Breast epithelium (tissue), 4 donors: ENCODE measurements at regions of chr5 and their contacts with region 1.

Region 1: DNA sequence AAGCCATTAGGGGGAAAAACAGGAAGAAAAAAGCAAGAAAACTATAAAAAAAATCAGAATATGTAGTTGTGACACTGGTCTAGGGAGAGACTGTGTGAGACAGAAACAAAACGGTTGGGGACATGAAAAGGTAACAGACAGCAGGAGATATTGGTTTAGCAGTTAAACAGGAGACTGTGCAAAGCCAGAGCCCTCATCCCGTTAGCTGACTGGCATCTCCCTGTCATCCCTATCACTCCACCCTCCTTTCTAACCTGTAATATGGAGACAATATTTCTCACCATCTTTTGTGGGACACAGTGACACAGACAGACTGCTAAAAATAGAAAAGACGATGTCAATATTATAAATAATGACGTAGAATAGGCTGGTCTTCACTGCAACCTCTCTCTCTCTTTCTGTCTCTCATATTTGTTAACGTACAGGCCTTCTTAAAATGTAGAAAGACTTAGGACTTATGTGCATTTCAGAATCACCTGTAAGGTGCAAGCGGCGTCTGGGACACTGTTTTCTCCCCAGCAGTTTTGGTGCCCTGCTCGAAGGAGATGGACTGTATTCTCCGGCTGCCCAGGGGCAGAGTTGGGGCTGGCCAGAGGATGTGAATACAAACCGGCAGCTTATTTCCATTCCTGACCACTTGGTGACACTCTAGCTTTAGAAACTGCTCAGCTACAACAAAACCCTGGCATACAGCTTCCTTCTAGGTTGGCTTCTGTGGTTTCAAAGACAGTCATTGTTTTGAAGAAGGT is 190.6 kb downstream of the MAT2B start:
- DNase-seq: no peak
- H3K4me3 ChIP-seq: no peak overlapping the region
- H3K27ac ChIP-seq: no peak overlapping the region
- H3K4me1 ChIP-seq: no peaks in the 10 kb centered on the region
- H3K27me3 ChIP-seq: no peaks in the 10 kb centered on the region
- CTCF ChIP-seq: peak in 2 of 3 donors; percentile 44 to 48
- POLR2A ChIP-seq: no peak

Region 2: GRCh38 chr5:163658702-163659567 is 37.1 kb before region 1 on chr5:
- intact Hi-C with region 1: no loop called
- DNase-seq: no peak
- H3K4me3 ChIP-seq: no peak overlapping the region
- H3K27ac ChIP-seq: no peak overlapping the region
- H3K4me1 ChIP-seq: no peaks in the 10 kb centered on the region
- H3K27me3 ChIP-seq: no peaks in the 10 kb centered on the region
- CTCF ChIP-seq: no peak
- POLR2A ChIP-seq: no peak

Region 3: DNA sequence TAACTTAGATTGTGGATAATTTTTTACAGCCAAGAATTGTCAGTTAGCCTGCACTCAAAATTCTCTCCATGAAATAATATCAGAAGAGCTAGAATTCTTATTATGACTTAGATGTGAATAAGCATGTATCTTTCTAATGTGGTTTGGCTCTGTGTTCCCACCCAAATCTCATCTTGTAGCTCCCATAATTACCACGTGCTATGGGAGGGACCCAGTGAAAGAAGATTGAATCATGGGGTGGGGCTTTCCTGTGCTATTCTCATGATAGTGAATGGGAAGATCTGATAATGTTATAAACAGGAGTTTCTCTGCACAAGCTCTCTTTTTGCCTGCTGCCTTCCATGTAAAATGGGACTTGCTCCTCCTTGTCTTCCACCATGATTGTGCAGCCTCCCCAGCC is 13.8 kb before region 1 on chr5:
- intact Hi-C with region 1: loop called (anchors 1 kb)
- DNase-seq: no peak
- H3K4me3 ChIP-seq: no peak overlapping the region
- H3K27ac ChIP-seq: no peak overlapping the region
- H3K4me1 ChIP-seq: no peaks in the 10 kb centered on the region
- H3K27me3 ChIP-seq: no peaks in the 10 kb centered on the region
- CTCF ChIP-seq: no peak
- POLR2A ChIP-seq: no peak